ENCODE measurements at regions of chr18 and their contacts with region 1.

Region 1: DNA sequence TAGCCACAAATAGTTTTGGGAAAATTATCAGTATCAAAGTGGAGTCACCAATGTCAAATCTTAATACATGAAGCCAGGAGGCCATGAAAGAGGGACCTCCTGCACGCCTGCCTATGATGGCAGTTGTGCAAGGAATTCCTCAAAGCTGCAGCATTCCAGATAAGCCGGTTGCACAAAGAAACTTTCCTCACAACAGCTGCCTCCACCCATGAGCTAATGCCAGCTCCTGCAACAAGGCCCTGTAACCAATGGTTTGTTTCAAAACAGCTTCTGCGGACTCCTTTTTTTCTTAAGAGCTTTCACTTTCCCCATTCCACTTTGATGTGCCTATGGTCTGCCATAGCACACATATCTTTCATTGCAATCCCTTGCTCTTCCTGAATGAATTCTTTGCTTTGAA is 22.5 kb downstream of the TMEM200C start:
- DNase-seq: no peak
- H3K4me3 ChIP-seq: no peak overlapping the region
- H3K27ac ChIP-seq: no peak overlapping the region
- H3K4me1 ChIP-seq: no peaks in the 10 kb centered on the region
- H3K27me3 ChIP-seq: no peaks in the 10 kb centered on the region
- CTCF ChIP-seq: no peak
- POLR2A ChIP-seq: no peak

Region 2: DNA sequence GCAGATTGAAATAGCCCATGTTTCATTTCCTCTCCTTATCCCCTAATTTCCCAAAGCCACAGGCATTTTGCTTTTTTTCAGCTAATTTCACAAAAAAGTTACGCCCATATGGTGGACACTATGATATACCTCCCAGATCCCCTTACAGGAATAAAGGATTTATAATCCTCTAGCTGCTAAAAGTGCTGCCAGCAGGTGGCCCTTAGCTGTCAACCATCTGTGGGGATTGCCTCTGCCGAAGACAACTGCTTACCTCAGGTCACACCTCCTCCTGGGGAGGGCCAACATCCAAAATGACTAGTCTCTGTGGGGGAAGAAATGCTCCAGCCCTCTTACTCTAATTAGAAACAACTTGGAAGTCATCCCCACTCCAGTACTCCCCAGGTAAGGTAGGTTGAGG is 268.1 kb before region 1 on chr18:
- intact Hi-C with region 1: no loop called
- DNase-seq: no peak
- H3K4me3 ChIP-seq: no peak overlapping the region
- H3K27ac ChIP-seq: no peak overlapping the region
- H3K4me1 ChIP-seq: no peaks in the 10 kb centered on the region
- H3K27me3 ChIP-seq: no peaks in the 10 kb centered on the region
- CTCF ChIP-seq: no peak
- POLR2A ChIP-seq: no peak

Region 3: DNA sequence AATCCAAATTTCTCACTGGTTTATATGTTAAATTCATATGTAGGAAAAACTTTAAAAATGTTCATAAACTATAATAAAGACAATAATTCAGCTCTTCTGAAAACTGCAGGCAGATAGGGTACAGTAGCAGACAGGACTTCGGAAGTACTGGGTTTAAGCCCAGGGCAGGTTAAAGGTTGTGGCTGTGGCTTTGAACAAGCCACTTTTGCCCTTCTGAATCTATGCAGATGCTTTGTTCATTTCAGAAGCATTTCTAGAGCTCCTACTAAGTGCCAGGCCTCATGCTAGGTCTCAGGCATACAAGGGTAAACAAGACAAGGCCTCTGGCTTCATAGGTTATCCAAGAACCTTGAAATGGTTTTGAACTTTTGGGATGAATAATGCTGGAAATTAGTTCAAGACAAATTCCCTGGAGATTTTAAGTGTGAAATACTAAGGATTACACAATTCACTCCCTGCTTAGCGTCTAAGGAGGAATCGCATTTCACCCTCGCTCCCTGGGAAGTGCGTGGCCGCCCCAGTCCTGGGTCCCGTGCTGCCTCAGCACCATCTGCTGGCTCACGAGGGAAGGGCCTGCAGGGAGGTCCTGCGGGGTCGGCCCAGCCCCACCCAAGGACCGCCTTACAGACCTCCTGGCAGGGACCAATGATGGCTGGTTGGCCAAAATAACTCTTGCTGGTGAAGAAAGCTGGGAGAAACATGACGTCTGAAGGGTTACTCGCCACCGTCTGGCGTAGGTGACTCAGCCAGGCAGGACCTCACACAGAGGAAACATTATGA is 609.5 kb after region 1 on chr18:
- intact Hi-C with region 1: loop called (anchors 5 kb)
- DNase-seq: no peak
- H3K4me3 ChIP-seq: no peak overlapping the region
- H3K27ac ChIP-seq: no peak overlapping the region
- H3K4me1 ChIP-seq: no peaks in the 10 kb centered on the region
- H3K27me3 ChIP-seq: no peaks in the 10 kb centered on the region
- CTCF ChIP-seq: peak; percentile 22 to 74 (median 70)
- POLR2A ChIP-seq: no peak

Measured in vagina (tissue), 2 donors.